Tibial artery (tissue), 4 donors: ENCODE measurements at regions of chr19 and their contacts with region 1.

Region 1: DNA sequence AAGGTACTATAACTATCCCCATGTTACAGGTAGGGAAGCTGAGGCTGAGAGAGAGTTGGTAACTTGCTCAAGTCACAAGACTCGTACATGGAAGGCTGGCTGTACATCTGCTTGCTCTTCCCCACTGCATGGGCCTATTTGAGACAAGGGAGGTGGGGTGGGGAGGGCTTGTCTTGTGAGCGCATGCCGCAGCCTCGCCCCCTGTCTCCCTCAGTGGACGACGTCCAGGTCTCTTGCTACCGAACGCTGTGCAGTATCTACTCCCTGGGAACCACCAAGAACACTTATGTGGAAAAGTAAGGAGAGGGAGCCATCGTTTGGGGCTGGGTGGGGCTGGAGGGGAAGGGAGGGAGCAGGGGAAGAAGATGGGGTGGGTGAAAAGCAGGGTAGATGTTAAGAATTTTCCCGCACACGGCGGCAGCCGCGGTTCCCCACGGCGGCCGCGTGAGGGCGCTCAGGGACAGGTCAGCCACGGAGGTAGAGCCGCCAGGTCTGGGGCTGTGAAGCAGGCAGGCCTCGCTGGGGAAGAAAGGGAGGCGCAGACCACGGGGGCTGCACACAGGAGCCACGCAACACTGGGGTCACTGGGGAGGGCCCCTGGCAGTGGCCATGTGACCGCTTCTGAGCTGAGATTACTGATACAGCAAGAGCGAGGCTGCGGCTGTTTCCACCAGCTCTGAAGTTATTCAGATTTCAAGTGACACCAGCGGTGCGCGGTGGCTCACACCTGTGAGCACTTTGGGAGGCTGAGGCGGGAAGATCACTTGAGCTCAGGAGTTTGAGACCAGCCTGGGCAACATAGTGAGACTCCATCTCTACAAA is 81.5 kb downstream of the RYR1 start:
- DNase-seq: peak; percentile 41 to 73
- H3K4me3 ChIP-seq: no peak overlapping the region
- H3K27ac ChIP-seq: no peak overlapping the region
- H3K4me1 ChIP-seq: peaks cover 0 to 9% (median 4%) of the 10 kb centered on the region in 4 donors
- H3K27me3 ChIP-seq: peaks cover 0 to 29% of the 10 kb centered on the region in 2 donors
- CTCF ChIP-seq: peak; percentile 75 to 91

Region 2: GRCh38 chr19:38634757-38635482 is 119.9 kb after region 1 on chr19:
- intact Hi-C with region 1: loop called (anchors 5 kb)
- DNase-seq: peak; percentile 63 to 84
- H3K4me3 ChIP-seq: no peak overlapping the region
- H3K27ac ChIP-seq: peak overlapping the region in 1 of 2 donors; percentile 25
- H3K4me1 ChIP-seq: peaks cover 0 to 9% (median 0%) of the 10 kb centered on the region in 4 donors
- H3K27me3 ChIP-seq: no peaks in the 10 kb centered on the region
- CTCF ChIP-seq: peak; percentile 90 to 97

Region 3: DNA sequence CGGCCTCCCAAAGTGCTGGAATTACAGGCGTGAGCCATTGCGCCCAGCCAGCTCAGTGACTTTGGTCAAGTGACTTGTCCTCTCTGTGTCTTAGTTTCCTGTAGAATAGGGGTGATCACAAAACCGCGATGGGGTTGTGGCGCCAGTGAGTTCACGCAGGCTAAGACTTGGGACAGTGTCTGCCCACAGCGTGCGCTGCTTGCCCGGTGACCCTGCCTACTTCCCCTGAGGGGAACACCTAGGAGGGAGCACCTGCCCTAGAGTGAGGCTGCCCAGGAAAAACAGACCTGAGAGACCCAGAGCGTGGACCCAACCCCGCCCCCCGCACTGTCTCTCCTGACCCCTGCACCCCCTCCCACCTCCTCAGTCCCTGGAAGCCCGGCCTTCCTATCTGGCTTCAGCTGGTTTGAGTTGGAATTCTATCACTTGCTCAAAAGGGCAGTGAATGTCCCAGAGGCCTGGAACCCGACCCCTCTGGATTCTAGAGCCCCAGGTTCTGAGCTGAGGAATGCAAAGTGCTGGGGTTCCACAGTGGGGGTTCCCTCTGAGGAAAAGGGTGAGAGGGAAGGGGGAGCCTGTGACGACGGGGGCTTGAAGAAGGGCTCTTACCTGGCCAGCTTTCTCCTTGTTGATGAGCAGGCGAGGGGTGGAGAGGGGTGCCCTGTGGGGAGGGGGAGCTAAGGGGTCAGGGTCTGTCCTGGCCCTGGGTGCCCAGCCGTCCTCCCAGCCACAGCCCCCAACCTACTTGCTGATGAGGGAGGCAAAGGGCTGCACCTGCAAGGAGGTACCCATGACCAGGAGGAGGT is 365.3 kb after region 1 on chr19:
- intact Hi-C with region 1: loop called (anchors 10 kb)
- DNase-seq: no peak
- H3K4me3 ChIP-seq: no peak overlapping the region
- H3K27ac ChIP-seq: no peak overlapping the region
- H3K4me1 ChIP-seq: no peaks in the 10 kb centered on the region
- H3K27me3 ChIP-seq: no peaks in the 10 kb centered on the region
- CTCF ChIP-seq: no peak